Heart left ventricle (tissue), 16 donors: ENCODE measurements at regions of chr7 and their contacts with region 1.

Region 1: GRCh38 chr7:124784879-124785818 is 19.6 kb upstream of the GPR37 start:
- DNase-seq: peak in 2 of 5 donors; percentile 21 to 35
- ATAC-seq: peak in 3 of 4 donors; percentile 62 to 81 (median 64)
- H3K4me3 ChIP-seq: no peak overlapping the region
- H3K27ac ChIP-seq: no peak overlapping the region
- H3K4me1 ChIP-seq: no peaks in the 10 kb centered on the region
- H3K27me3 ChIP-seq: no peaks in the 10 kb centered on the region
- CTCF ChIP-seq: peak; percentile 33 to 74 (median 64)
- POLR2A ChIP-seq: no peak

Region 2: GRCh38 chr7:124152859-124153692 is 632.1 kb before region 1 on chr7:
- intact Hi-C with region 1: loop called in 4 of 10 experiments (anchors 5 kb)
- DNase-seq: no peak
- ATAC-seq: peak in 2 of 4 donors; percentile 36 to 52
- H3K4me3 ChIP-seq: no peak overlapping the region
- H3K27ac ChIP-seq: no peak overlapping the region
- H3K4me1 ChIP-seq: no peaks in the 10 kb centered on the region
- H3K27me3 ChIP-seq: no peaks in the 10 kb centered on the region
- CTCF ChIP-seq: peak in 5 of 12 donors; percentile 12 to 37 (median 30)
- POLR2A ChIP-seq: no peak

Region 3: GRCh38 chr7:124171068-124171467 is 614.1 kb before region 1 on chr7:
- intact Hi-C with region 1: loop called (anchors 2 to 5 kb)
- DNase-seq: peak in 1 of 5 donors; percentile 25
- ATAC-seq: no peak
- H3K4me3 ChIP-seq: no peak overlapping the region
- H3K27ac ChIP-seq: no peak overlapping the region
- H3K4me1 ChIP-seq: no peaks in the 10 kb centered on the region
- H3K27me3 ChIP-seq: no peaks in the 10 kb centered on the region
- CTCF ChIP-seq: peak in 10 of 12 donors; percentile 13 to 50 (median 39)
- POLR2A ChIP-seq: no peak